T-cell (primary cell): ENCODE measurements at regions of chr2 and their contacts with region 1.

Region 1: GRCh38 chr2:100548771-100549170 is 14.0 kb upstream of the PDCL3 start:
- DNase-seq: no peak
- ATAC-seq: no peak
- H3K4me3 ChIP-seq: no peak overlapping the region
- H3K4me3 Mint-ChIP-seq: no peak overlapping the region
- H3K27ac ChIP-seq: no peak overlapping the region
- H3K27ac Mint-ChIP-seq: no peak overlapping the region
- H3K4me1 ChIP-seq: no peaks in the 10 kb centered on the region
- H3K4me1 Mint-ChIP-seq: peaks cover 0 to 3% (median 0%) of the 10 kb centered on the region in 3 donors
- H3K27me3 ChIP-seq: peaks cover 0 to 3% of the 10 kb centered on the region in 2 experiments
- H3K27me3 Mint-ChIP-seq: peaks cover 0 to 20% of the 10 kb centered on the region in 2 donors

Region 2: DNA sequence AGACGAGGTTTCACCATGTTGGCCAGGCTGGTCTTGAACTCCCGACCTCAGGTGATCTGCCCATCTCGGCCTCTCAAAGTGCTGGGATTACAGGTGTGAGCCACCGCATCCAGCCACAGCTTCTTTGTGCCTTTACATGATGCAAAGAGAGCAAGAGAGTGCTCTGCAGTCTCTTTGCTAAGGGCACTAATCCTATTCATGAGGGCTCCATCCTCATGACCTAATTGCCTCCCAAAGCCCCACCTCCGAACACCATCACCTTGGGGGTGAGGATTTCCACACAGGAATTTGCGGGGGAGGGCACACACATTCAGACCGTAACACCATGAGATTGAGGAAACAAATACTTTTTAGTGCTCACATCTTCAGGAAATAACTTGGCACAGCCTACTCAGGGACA is 105.8 kb after region 1 on chr2:
- CTCF ChIA-PET with region 1: no interaction called
- POLR2A ChIA-PET with region 1: interaction called in 1 of 2 experiments, 11 read pairs
- DNase-seq: no peak
- ATAC-seq: no peak
- H3K4me3 ChIP-seq: no peak overlapping the region
- H3K4me3 Mint-ChIP-seq: peak overlapping the region in 1 of 3 donors; percentile 54
- H3K27ac ChIP-seq: no peak overlapping the region
- H3K27ac Mint-ChIP-seq: peak overlapping the region in 1 of 2 donors; percentile 34
- H3K4me1 ChIP-seq: peaks cover 15 to 32% of the 10 kb centered on the region in 2 experiments
- H3K4me1 Mint-ChIP-seq: peaks cover 33 to 43% (median 42%) of the 10 kb centered on the region in 3 donors
- H3K27me3 ChIP-seq: no peaks in the 10 kb centered on the region
- H3K27me3 Mint-ChIP-seq: peaks cover 0 to 5% of the 10 kb centered on the region in 2 donors